ENCODE measurements at regions of chr12 and their contacts with region 1.

Region 1: DNA sequence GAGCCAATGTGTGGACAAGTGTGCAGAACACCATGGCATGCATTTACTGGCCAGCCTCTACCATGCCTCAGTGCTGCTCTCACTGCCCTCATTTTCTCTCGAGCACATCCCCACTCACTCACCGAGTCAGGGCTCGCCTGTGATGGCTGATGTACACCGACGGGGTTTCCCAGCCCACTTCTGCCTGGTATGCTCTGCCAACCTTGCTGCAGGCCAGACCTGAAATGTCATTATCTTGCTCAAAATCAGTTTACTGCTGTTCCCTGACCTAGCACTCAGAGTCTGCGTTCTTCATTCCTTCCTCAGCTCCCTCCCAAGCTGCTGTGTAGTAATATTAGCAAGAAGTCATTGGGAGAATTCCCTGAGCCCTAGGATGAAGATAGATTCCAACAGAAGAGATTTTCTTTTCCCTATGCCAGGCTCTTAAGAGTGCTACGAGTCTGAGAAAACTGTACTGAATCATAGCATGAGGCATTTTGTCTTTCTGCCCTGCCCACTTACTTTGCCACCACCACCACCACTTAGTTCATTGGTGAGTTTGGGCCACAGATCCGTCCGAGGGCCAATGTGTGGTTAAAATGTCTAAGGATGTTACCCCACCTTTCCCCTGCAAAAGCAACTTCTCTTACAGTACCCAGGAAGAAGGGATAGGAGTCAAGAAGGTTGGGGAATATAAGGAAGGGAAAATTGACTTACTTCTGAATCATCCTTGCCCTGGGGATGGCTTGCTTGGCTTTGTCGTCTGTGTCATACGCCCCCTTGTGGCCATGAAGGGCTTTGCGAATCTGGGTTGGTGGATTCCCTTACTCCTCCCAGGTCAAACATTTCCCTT is 51.0 kb downstream of the BMAL2 start:
- DNase-seq: peak; percentile 83
- ATAC-seq: peak; percentile 68
- H3K4me3 Mint-ChIP-seq: no peak overlapping the region
- H3K27ac Mint-ChIP-seq: no peak overlapping the region
- H3K4me1 Mint-ChIP-seq: no peaks in the 10 kb centered on the region
- H3K27me3 Mint-ChIP-seq: no peaks in the 10 kb centered on the region

Region 2: GRCh38 chr12:27024291-27024690 is 359.4 kb before region 1 on chr12:
- CTCF ChIA-PET with region 1: interaction called, 3 read pairs
- POLR2A ChIA-PET with region 1: interaction called, 4 read pairs
- intact Hi-C with region 1: loop called in 1 of 2 experiments (anchors 5 kb)
- DNase-seq: no peak
- ATAC-seq: no peak
- H3K4me3 Mint-ChIP-seq: peak overlapping the region; percentile 96
- H3K27ac Mint-ChIP-seq: no peak overlapping the region
- H3K4me1 Mint-ChIP-seq: peaks cover 30% of the 10 kb centered on the region
- H3K27me3 Mint-ChIP-seq: peaks cover 4% of the 10 kb centered on the region

Region 3: DNA sequence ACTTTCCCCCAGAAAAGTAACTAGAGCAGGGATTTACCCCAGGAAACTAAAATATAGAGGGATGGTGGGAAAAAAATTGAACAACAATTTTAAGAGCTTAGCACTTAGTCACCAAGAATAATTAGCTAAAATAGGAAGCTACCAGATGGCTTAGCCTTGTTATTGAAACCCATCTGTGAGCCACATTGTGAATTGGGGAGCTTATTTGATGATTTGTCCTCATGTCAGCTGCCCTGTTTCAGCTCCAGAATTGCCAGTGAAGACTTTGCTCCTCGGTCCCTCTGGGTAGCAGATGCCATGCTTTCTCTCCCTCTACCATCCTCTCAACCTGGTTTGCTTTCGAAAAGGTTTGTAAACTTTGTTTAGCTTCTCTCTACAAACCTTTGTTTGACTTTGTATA is 656.6 kb after region 1 on chr12:
- CTCF ChIA-PET with region 1: no interaction called
- POLR2A ChIA-PET with region 1: no interaction called
- intact Hi-C with region 1: no loop called
- DNase-seq: no peak
- ATAC-seq: no peak
- H3K4me3 Mint-ChIP-seq: no peak overlapping the region
- H3K27ac Mint-ChIP-seq: no peak overlapping the region
- H3K4me1 Mint-ChIP-seq: no peaks in the 10 kb centered on the region
- H3K27me3 Mint-ChIP-seq: peaks cover 3% of the 10 kb centered on the region

Measured in activated CD4-positive, alpha-beta T cell treated with anti-CD3 and anti-CD28 coated beads for 36 hours (primary cell).